AG04450 (cell line): ENCODE measurements at regions of chr9 and their contacts with region 1.

Region 1: GRCh38 chr9:128117613-128118471 is 9.7 kb downstream of the PTGES2 start:
- DNase-seq: peak; percentile 73
- H3K4me3 ChIP-seq: no peak overlapping the region
- H3K27ac ChIP-seq: no peak overlapping the region
- H3K27me3 ChIP-seq: no peaks in the 10 kb centered on the region
- CTCF ChIP-seq: peak; percentile 100

Region 2: GRCh38 chr9:127955294-127956035 is 162.4 kb before region 1 on chr9:
- CTCF ChIA-PET with region 1: interaction called, 12 read pairs
- POLR2A ChIA-PET with region 1: no interaction called
- DNase-seq: no peak
- H3K4me3 ChIP-seq: no peak overlapping the region
- H3K27ac ChIP-seq: no peak overlapping the region
- H3K27me3 ChIP-seq: no peaks in the 10 kb centered on the region
- CTCF ChIP-seq: no peak

Region 3: GRCh38 chr9:128088253-128088945 is 29.4 kb before region 1 on chr9:
- CTCF ChIA-PET with region 1: interaction called, 42 read pairs
- POLR2A ChIA-PET with region 1: interaction called, 3 read pairs
- DNase-seq: no peak
- H3K4me3 ChIP-seq: no peak overlapping the region
- H3K27ac ChIP-seq: no peak overlapping the region
- H3K27me3 ChIP-seq: no peaks in the 10 kb centered on the region
- CTCF ChIP-seq: no peak

Region 4: GRCh38 chr9:128127990-128128835 is 10.4 kb after region 1 on chr9:
- CTCF ChIA-PET with region 1: interaction called, 53 read pairs
- POLR2A ChIA-PET with region 1: interaction called, 6 read pairs
- DNase-seq: peak; percentile 77
- H3K4me3 ChIP-seq: peak overlapping the region; percentile 90
- H3K27ac ChIP-seq: peak overlapping the region; percentile 92
- H3K27me3 ChIP-seq: peaks cover 4% of the 10 kb centered on the region
- CTCF ChIP-seq: no peak

Region 5: GRCh38 chr9:128191406-128192046 is 73.7 kb after region 1 on chr9 and contains the start of gene CIZ1:
- CTCF ChIA-PET with region 1: interaction called, 13 read pairs
- POLR2A ChIA-PET with region 1: no interaction called
- DNase-seq: no peak
- H3K4me3 ChIP-seq: peak within 1 kb of the TSS; percentile 83
- H3K27ac ChIP-seq: peak within 1 kb of the TSS; percentile 31
- H3K27me3 ChIP-seq: no peaks in the 10 kb centered on the region
- CTCF ChIP-seq: peak; percentile 65
- polyA plus RNA-seq, gene CIZ1: 26.9 and 45.6 TPM in 2 replicates

Region 6: GRCh38 chr9:128504485-128505413 is 386.9 kb after region 1 on chr9 and contains the start of gene GLE1:
- CTCF ChIA-PET with region 1: no interaction called
- POLR2A ChIA-PET with region 1: no interaction called
- DNase-seq: peak; percentile 71
- H3K4me3 ChIP-seq: peak within 1 kb of the TSS; percentile 99
- H3K27ac ChIP-seq: peak within 1 kb of the TSS; percentile 52
- H3K27me3 ChIP-seq: no peaks in the 10 kb centered on the region
- CTCF ChIP-seq: no peak
- polyA plus RNA-seq, gene GLE1: 21.6 and 27.3 TPM in 2 replicates